HEK293 (cell line): ENCODE measurements at regions of chr22 and their contacts with region 1.

Region 1: GRCh38 chr22:29689880-29690213 is 30.0 kb upstream of the CABP7 start:
- H3K4me3 ChIP-seq: no peak overlapping the region
- H3K27ac ChIP-seq: no peak overlapping the region
- H3K4me1 ChIP-seq: peaks cover 4% of the 10 kb centered on the region; the same call in 1 of the 2 replicates
- CTCF ChIP-seq: peak; percentile 89

Region 2: GRCh38 chr22:29596408-29596807 is 93.4 kb before region 1 on chr22:
- CTCF ChIA-PET with region 1: no interaction called
- POLR2A ChIA-PET with region 1: no interaction called
- H3K4me3 ChIP-seq: no peak overlapping the region
- H3K27ac ChIP-seq: no peak overlapping the region
- H3K4me1 ChIP-seq: no peaks in the 10 kb centered on the region
- CTCF ChIP-seq: no peak

Region 3: GRCh38 chr22:29663180-29663821 is 26.5 kb before region 1 on chr22:
- CTCF ChIA-PET with region 1: interaction called, 13 read pairs
- POLR2A ChIA-PET with region 1: no interaction called
- H3K4me3 ChIP-seq: no peak overlapping the region
- H3K27ac ChIP-seq: no peak overlapping the region
- H3K4me1 ChIP-seq: no peaks in the 10 kb centered on the region
- CTCF ChIP-seq: no peak

Region 4: DNA sequence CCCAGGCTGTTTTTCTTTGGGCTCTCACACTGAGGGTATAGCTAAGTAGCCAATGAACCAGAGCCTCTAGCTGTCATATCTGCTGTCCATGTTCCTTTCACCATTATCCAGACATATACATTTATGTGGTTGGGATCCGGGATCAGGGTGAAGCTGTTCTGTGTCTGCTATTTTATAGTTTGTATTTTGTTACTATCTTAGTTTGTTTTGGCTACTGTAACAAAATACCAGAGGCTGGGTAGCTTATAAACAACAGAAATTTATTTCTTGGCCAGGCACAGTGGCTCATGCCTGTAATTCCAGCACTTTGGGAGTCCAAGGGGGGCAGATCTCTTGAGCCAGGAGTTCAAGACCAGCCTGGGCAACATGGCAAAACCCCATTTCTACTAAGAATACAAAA is 10.5 kb before region 1 on chr22:
- CTCF ChIA-PET with region 1: interaction called, 21 read pairs
- POLR2A ChIA-PET with region 1: no interaction called
- H3K4me3 ChIP-seq: no peak overlapping the region
- H3K27ac ChIP-seq: no peak overlapping the region
- H3K4me1 ChIP-seq: no peaks in the 10 kb centered on the region
- CTCF ChIP-seq: no peak

Region 5: DNA sequence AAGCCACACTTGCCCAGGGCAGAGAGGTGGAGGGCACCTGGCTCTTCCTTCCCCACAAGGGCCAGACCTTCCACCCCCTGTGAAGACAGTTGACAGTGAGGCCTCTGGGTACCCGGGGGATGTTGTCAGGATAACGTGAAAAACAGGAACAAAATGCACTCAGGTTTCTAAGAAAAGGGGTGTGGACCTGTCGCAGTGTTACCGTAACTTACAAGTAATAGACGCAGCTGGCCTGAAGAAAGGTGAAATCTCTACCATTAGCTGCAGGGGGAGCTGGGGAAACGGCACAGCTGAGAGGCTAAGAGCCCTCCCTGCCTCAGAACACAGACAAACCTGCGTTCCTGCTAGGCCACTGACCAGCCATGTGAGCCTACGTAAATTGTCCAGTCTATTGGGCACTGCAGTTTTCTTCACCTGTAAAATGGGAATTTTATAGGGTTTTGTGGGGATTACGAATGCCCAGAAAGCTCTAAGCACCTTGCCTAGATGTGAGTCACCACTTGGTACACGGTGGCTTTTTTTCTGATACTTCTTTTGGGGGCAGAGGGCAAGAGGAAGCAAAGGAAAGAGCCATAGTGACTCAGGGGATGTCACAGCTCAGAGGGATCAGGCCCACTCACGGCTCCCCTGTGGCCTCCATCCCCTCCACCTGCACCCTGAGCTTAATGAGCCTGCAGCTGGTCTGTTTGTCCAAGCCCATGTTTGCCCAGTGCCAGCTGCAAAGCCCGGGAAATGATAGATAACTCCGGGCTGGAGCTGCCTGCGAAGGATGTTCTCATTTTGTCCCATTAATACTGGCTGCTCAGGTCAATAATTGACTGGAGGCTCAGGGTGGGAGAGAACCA is 11.5 kb after region 1 on chr22:
- CTCF ChIA-PET with region 1: interaction called, 20 read pairs
- POLR2A ChIA-PET with region 1: interaction called, 7 read pairs
- H3K4me3 ChIP-seq: no peak overlapping the region
- H3K27ac ChIP-seq: no peak overlapping the region
- H3K4me1 ChIP-seq: peaks cover 20% of the 10 kb centered on the region
- CTCF ChIP-seq: no peak

Region 6: DNA sequence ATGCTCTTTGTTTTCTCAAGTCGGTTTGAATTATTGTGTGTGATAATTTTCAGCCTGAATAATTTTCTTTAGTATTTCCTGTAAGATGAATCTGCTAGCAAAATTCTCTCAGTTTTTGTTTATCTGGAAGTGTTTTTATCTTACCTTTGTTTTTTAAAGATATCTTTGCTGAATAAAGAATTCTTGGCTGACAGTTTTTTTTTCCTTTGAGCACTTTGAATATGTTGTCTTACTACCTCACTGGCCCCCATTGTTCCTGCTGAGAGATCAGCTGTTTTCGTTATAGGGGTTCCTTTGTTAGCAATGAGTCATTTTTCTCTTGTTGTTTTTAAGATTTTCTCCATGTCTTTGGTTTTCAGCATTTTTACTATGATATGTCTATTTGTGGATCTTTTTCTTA is 453.4 kb after region 1 on chr22:
- CTCF ChIA-PET with region 1: no interaction called
- POLR2A ChIA-PET with region 1: no interaction called
- H3K4me3 ChIP-seq: no peak overlapping the region
- H3K27ac ChIP-seq: no peak overlapping the region
- H3K4me1 ChIP-seq: no peaks in the 10 kb centered on the region
- CTCF ChIP-seq: no peak